ENCODE measurements at regions of chr2 and their contacts with region 1.

Region 1: DNA sequence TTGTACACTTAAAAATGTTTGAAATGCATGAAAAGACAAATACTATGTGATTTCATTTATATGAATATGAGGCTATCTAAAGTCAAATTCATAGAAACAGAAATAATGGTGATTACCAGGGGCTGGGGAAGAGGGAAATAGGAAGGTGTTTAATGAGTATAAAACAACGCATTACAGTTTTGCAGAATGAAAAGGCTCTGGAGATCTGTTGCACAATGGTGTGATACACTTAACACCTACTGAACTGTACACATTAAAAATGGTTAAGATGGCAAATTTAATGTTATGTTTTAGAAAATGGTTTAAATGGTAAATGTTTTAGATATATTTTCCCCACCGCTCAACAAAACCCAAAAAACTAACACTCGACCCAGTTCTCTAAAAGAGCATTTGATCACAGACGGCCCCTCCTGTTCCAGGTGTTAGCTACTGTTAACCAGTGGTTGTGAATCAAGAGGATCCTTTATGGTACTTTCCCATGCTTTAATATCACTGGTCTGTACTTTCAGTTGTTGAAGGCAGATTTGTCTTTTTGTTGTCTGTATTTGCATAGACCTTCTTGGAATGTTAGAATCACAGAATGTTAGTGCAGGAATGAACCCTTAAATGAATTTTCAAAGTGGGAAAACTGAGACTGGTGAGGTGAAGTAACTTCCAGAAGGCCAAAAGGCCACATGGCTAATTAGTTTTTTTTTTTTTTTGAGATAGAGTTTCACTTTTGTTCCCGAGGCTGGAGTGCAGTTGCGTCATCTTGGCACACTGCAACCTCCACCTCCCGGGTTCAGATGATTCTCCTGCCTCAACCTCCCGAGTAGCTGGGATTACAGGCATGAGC is 10.2 kb downstream of the RAB10 start:
- DNase-seq: peak in 2 of 35 experiments; percentile 16 to 45
- ATAC-seq: peak in 1 of 4 experiments; percentile 79
- H3K4me3 ChIP-seq: peak overlapping the region in 1 of 2 donors; percentile 1
- H3K4me3 Mint-ChIP-seq: peak overlapping the region; percentile 3 to 49 (median 19)
- H3K27ac ChIP-seq: peak overlapping the region; percentile 20
- H3K27ac Mint-ChIP-seq: peak overlapping the region; percentile 5 to 38
- H3K4me1 ChIP-seq: peaks cover 6 to 33% of the 10 kb centered on the region in 2 experiments
- H3K4me1 Mint-ChIP-seq: peaks cover 70 to 75% (median 73%) of the 10 kb centered on the region in 3 donors
- H3K27me3 ChIP-seq: no peaks in the 10 kb centered on the region
- H3K27me3 Mint-ChIP-seq: no peaks in the 10 kb centered on the region

Region 2: GRCh38 chr2:26054598-26055348 is 10.7 kb after region 1 on chr2:
- CTCF ChIA-PET with region 1: interaction called in 1 of 2 experiments, 11 read pairs
- POLR2A ChIA-PET with region 1: no interaction called
- DNase-seq: no peak
- ATAC-seq: peak in 1 of 4 experiments; percentile 49
- H3K4me3 ChIP-seq: no peak overlapping the region
- H3K4me3 Mint-ChIP-seq: no peak overlapping the region
- H3K27ac ChIP-seq: no peak overlapping the region
- H3K27ac Mint-ChIP-seq: no peak overlapping the region
- H3K4me1 ChIP-seq: peaks cover 3 to 26% of the 10 kb centered on the region in 2 experiments
- H3K4me1 Mint-ChIP-seq: peaks cover 75 to 80% (median 77%) of the 10 kb centered on the region in 3 donors
- H3K27me3 ChIP-seq: no peaks in the 10 kb centered on the region
- H3K27me3 Mint-ChIP-seq: no peaks in the 10 kb centered on the region

Region 3: DNA sequence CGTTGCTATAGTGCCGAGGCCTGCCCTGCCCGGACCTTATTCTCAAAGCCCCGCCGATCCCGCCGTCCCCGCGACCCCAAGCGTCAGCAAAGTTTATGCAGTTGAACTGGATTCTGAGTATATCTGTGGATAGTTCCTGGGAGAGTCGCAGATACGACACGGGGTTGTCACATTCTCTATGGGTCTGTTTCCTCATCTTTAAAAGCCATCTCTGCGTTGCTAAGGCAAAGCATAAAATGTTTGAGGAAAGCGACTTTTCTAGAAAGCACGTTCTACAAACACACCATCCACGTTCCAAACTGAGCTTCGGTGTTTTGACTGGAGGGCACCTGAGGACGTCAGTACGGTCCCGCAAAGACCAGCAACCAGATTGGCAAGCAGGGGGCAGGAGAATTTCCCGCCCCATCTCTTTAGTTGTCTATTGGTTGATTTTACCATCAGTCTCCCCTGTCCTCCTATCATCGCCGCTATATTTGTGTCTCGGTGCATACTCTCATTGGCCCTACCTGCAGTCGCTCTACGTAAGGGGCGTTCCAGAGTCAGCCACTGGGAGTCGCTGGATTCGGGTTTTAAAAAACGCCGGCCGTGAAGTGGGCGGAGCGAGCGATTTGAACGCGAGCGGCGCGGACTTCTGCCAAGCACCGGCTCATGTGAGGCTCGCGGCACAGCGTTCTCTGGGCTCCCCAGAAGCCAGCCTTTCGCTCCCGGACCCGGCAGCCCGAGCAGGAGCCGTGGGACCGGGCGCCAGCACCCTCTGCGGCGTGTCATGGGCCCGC is 741.5 kb after region 1 on chr2 and contains the start of gene CENPA:
- CTCF ChIA-PET with region 1: no interaction called
- POLR2A ChIA-PET with region 1: interaction called in 1 of 2 experiments, 19 read pairs
- DNase-seq: peak; percentile 88 to 98 (median 96)
- ATAC-seq: peak; percentile 98 to 100 (median 100)
- H3K4me3 ChIP-seq: peak within 1 kb of the TSS; percentile 55 to 83
- H3K4me3 Mint-ChIP-seq: peak within 1 kb of the TSS; percentile 83 to 85 (median 84)
- H3K27ac ChIP-seq: peak within 1 kb of the TSS; percentile 46
- H3K27ac Mint-ChIP-seq: peak within 1 kb of the TSS; percentile 71 to 79
- H3K4me1 ChIP-seq: peaks cover 2 to 15% of the 10 kb centered on the region in 2 experiments
- H3K4me1 Mint-ChIP-seq: peaks cover 11 to 19% (median 11%) of the 10 kb centered on the region in 3 donors
- H3K27me3 ChIP-seq: peaks cover 0 to 13% of the 10 kb centered on the region in 2 experiments
- H3K27me3 Mint-ChIP-seq: peaks cover 0 to 11% of the 10 kb centered on the region in 2 donors
- total RNA-seq, gene CENPA: 0.30 to 1.9 (median 0.76) TPM

Measured in T-cell (primary cell).